Esophagus muscularis mucosa (tissue), 4 donors: ENCODE measurements at regions of chr2 and their contacts with region 1.

Region 1: GRCh38 chr2:9142551-9143263 is 63.9 kb upstream of the ASAP2 start:
- DNase-seq: peak; percentile 97
- H3K4me3 ChIP-seq: peak overlapping the region; percentile 14 to 37 (median 31)
- H3K27ac ChIP-seq: peak overlapping the region; percentile 60 to 66 (median 62)
- H3K4me1 ChIP-seq: peaks cover 10 to 33% (median 30%) of the 10 kb centered on the region in 4 donors
- H3K27me3 ChIP-seq: no peaks in the 10 kb centered on the region
- CTCF ChIP-seq: peak in 2 of 3 experiments; percentile 98 to 100
- EP300 ChIP-seq: no peak
- POLR2A ChIP-seq: no peak

Region 2: DNA sequence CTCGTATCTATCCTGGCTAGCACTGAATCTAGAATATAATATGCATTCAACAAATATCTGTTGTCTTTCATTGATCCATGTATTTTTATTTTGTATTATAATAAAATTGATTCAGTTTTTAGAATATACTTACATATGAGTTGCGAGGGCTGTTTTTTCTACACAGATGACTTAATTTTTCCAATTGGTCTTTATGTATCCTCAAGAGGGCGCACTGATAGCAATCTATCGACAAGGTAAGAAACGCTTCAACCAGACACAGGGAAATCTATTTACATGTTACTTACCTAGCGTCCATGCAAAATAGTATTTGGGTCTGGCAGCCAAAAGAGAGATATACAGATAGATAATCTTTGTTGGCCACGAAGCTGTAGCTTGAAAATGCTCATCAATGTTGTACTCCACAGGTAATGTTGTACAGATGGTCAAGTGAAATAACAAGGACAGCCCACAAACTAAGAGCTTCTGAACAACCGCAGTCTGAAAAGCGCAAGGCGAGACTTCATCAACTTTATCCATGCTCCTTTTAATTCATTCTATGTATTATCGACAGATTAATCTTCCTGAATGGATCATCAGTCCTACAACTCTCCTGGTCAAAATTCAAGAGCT is 269.8 kb before region 1 on chr2:
- intact Hi-C with region 1: loop called (anchors 2 kb)
- DNase-seq: no peak
- H3K4me3 ChIP-seq: no peak overlapping the region
- H3K27ac ChIP-seq: no peak overlapping the region
- H3K4me1 ChIP-seq: peaks cover 0 to 4% (median 0%) of the 10 kb centered on the region in 4 donors
- H3K27me3 ChIP-seq: no peaks in the 10 kb centered on the region
- CTCF ChIP-seq: peak; percentile 40 to 60 (median 50)
- EP300 ChIP-seq: no peak
- POLR2A ChIP-seq: no peak

Region 3: DNA sequence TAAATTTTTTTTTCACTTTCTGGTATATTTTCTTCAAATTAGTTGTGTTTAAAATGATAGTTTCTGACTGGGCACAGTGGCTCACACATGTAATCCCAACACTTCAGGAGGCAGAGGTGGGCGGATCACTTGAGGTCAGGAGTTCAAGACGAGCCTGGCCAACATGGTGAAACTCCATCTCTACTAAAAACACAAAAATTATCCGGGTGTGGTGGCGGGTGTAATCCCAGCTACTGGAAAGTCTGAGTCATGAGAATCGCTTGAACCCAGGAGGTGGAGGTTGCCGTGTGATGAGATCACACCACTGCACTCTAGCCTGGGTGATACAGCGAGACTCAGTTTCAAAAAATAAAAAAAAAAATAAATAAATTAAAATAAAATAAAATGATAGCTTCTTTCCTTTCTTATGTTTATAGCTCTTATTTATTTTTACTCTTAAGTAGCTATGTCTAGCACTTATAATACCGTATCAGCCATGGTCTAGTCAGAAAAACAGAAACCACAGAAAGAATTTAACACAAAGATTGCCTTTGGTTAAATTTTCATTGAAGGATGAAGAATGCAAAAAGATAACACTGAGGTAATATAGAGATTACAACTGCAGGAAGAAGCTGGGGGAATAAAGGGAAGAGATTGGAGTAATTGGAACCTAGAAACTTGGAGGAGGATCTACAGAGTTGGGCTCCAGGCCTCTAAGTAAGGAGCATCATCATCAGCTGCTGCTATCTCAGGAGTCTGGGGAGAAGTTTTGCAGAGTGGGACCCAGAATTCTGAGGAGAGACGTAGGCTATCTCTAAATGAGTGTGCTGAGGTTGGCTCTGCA is 84.6 kb before region 1 on chr2:
- intact Hi-C with region 1: no loop called
- DNase-seq: no peak
- H3K4me3 ChIP-seq: no peak overlapping the region
- H3K27ac ChIP-seq: no peak overlapping the region
- H3K4me1 ChIP-seq: no peaks in the 10 kb centered on the region
- H3K27me3 ChIP-seq: no peaks in the 10 kb centered on the region
- CTCF ChIP-seq: no peak
- EP300 ChIP-seq: no peak
- POLR2A ChIP-seq: no peak

Region 4: GRCh38 chr2:9199716-9200632 is 57.3 kb after region 1 on chr2:
- intact Hi-C with region 1: loop called (anchors 5 kb)
- DNase-seq: peak; percentile 89
- H3K4me3 ChIP-seq: no peak overlapping the region
- H3K27ac ChIP-seq: no peak overlapping the region
- H3K4me1 ChIP-seq: peaks cover 0 to 10% (median 2%) of the 10 kb centered on the region in 4 donors
- H3K27me3 ChIP-seq: no peaks in the 10 kb centered on the region
- CTCF ChIP-seq: no peak
- EP300 ChIP-seq: no peak
- POLR2A ChIP-seq: no peak

Region 5: GRCh38 chr2:9205963-9206948 is 63.5 kb after region 1 on chr2 and contains the start of gene ASAP2:
- intact Hi-C with region 1: loop called (anchors 2 kb)
- DNase-seq: no peak
- H3K4me3 ChIP-seq: peak within 1 kb of the TSS; percentile 67 to 93 (median 83)
- H3K27ac ChIP-seq: peak within 1 kb of the TSS; percentile 84 to 89 (median 86)
- H3K4me1 ChIP-seq: peaks cover 11 to 49% (median 46%) of the 10 kb centered on the region in 4 donors
- H3K27me3 ChIP-seq: no peaks in the 10 kb centered on the region
- CTCF ChIP-seq: peak; percentile 70 to 92 (median 84)
- EP300 ChIP-seq: no peak
- POLR2A ChIP-seq: no peak
- total RNA-seq, gene ASAP2: 18.7 to 24.0 (median 21.3) TPM

Region 6: DNA sequence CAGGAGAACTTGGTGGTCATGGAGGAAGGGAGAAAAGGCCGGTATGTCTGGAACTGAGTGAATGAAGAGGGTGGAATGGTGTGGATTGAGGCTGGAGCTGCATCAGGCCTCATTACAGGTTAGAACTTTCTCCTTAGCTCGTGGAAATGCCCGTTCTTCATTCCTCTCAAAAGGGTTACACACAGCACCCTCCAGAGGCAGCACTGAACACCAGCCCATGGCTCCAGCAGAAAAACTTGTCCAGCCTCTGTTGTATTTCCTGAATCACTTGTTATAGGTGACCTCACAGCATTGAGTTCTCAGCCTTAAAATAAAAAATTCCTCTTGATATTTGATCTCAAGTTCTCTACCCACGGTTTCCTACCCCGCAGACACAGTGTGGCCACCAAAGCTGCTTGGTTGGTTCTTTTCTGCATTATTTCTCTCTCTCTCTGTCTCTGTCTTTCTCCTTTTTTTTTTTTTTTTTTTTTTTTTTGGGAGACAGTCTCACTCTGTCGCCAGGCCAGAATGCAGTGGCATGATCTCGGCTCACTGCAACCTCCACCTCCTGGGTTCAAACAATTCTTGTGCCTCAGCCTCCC is 191.0 kb after region 1 on chr2:
- intact Hi-C with region 1: loop called (anchors 1 kb)
- DNase-seq: no peak
- H3K4me3 ChIP-seq: no peak overlapping the region
- H3K27ac ChIP-seq: no peak overlapping the region
- H3K4me1 ChIP-seq: peaks cover 17 to 27% (median 22%) of the 10 kb centered on the region in 4 donors
- H3K27me3 ChIP-seq: no peaks in the 10 kb centered on the region
- CTCF ChIP-seq: peak; percentile 66 to 77 (median 71)
- EP300 ChIP-seq: no peak
- POLR2A ChIP-seq: no peak

Region 7: DNA sequence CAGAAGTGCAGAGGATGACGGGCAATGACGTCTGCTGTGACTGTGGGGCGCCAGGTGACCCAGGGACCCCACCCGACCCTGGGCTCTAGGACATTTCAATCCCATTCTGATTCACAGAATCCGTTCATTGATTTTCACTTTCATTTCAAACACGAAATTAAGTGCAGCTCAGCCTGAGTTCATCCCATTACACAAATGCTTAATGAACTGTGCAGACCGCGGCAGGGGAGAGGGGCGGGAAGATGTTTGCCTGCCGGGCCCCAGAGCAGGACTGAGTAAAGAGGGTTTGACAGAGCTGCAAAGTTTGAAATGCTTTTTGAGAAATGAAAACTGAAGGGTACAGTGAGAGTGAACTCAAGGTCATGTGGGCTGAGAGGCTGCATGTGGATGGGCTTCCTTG is 213.6 kb after region 1 on chr2:
- intact Hi-C with region 1: no loop called
- DNase-seq: no peak
- H3K4me3 ChIP-seq: no peak overlapping the region
- H3K27ac ChIP-seq: no peak overlapping the region
- H3K4me1 ChIP-seq: no peaks in the 10 kb centered on the region
- H3K27me3 ChIP-seq: no peaks in the 10 kb centered on the region
- CTCF ChIP-seq: no peak
- EP300 ChIP-seq: no peak
- POLR2A ChIP-seq: no peak

Region 8: DNA sequence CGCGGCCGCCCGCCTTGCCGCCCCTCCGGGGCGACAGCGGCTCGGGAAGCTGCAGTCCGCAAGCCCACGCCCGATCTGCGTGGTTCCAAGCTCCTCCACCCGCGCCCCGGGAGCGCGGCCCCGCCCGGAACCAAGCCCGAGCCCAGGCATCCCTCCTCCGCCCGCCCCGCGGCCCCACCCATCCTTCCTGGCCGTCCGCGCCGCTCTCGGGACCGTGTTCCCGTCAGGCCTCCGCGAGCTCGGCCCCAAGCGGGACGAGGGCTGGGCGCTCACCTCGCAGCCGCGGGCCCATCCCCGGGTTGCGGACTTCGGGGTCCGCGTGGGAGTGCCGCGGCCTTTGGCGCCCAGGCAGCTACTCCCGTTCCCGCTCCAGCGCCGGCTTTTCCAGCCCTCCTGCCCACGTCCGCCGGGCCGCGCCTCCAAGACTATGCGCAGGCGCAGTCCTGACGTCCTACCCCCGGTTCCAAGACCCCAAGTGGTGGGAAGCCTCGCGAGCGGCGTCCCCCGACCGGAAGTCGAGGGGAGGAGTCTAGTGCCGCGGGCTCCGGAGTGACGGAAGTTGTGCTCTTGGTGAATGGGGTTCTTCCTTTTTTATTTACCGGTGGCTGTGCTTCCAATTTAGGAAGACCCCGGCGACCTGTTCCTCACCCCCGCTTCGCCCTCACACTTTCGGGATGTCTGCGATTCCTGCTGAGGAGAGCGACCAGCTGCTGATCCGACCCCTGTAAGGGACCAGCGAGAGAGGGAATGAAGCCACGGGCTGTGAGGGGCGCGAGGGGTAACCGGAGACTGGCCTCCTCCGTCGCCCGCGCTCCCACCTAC is 280.6 kb after region 1 on chr2 and contains the starts of genes CPSF3 and ITGB1BP1:
- intact Hi-C with region 1: loop called (anchors 5 kb)
- DNase-seq: peak; percentile 99
- H3K4me3 ChIP-seq: peak within 1 kb of the TSS; percentile 78 to 93 (median 92)
- H3K27ac ChIP-seq: peak within 1 kb of the TSS; percentile 93 to 95 (median 94)
- H3K4me1 ChIP-seq: peaks cover 26 to 52% (median 48%) of the 10 kb centered on the region in 4 donors
- H3K27me3 ChIP-seq: no peaks in the 10 kb centered on the region
- CTCF ChIP-seq: peak in 2 of 3 experiments; percentile 15 to 49
- EP300 ChIP-seq: no peak
- POLR2A ChIP-seq: peak; percentile 53
- total RNA-seq, gene CPSF3: 18.3 to 22.8 (median 20.7) TPM
- total RNA-seq, gene ITGB1BP1: 59.6 to 91.4 (median 66.1) TPM